ENCODE measurements at regions of chr1 and their contacts with region 1.

Region 1: GRCh38 chr1:202105539-202106276 is 17.0 kb upstream of the GPR37L1 start:
- DNase-seq: peak; percentile 58 to 90
- H3K4me3 ChIP-seq: peak overlapping the region in 1 of 4 experiments; percentile 33; a peak in 1 of 8 replicates
- H3K27ac ChIP-seq: peak overlapping the region; percentile 70; the same call in 1 of the 2 replicates
- H3K4me1 ChIP-seq: peaks cover 19 to 32% (median 20%) of the 10 kb centered on the region in 4 experiments
- H3K27me3 ChIP-seq: no peaks in the 10 kb centered on the region
- CTCF ChIP-seq: no peak
- EP300 ChIP-seq: no peak
- POLR2A ChIP-seq: no peak
- RAD21 ChIP-seq: no peak

Region 2: DNA sequence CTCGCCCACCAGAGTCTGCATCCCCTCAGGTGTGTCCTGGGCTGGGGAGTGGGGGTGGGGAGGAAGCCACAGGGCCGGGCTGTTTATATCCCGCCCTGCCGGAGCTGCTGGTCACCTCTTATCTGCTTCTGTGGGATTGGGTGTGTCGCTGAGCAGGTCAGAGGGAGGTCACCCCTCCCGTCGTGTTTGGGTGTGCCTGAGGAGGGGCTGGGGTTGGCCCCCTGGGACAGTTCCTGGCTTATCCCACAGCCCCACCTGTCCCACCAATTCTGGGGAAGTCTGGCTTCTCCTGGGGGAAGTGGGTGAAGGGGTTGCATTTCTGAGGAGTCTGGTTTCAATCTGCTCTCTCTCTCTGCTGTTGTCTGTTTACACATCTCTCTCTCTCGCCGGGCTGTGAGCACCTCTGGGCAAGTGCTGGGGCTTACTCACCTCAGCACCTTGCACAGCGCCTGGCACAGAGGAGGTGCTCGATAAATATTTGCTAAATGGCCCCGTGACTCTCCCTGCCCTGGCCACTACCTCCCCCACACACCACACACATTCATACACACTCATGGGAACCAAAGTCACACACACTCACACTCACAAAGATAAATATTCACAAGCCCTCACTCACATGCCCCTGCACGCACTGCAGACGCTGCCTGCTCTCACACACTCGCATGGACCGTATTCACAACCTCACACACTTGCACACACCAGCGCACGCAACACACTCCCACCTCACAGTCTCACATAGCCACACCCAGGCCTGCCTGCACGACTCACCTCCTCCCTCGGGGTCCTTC is 87.0 kb before region 1 on chr1:
- CTCF ChIA-PET with region 1: interaction called, 1,014 read pairs
- POLR2A ChIA-PET with region 1: interaction called, 33 read pairs
- DNase-seq: no peak
- H3K4me3 ChIP-seq: no peak overlapping the region
- H3K27ac ChIP-seq: no peak overlapping the region
- H3K4me1 ChIP-seq: peaks cover 0 to 13% (median 2%) of the 10 kb centered on the region in 4 experiments; a peak in 5 of 7 replicates
- H3K27me3 ChIP-seq: no peaks in the 10 kb centered on the region
- CTCF ChIP-seq: no peak
- EP300 ChIP-seq: no peak
- POLR2A ChIP-seq: no peak
- RAD21 ChIP-seq: no peak

Region 3: GRCh38 chr1:202122639-202123335 is 17.1 kb after region 1 on chr1 and contains the start of gene GPR37L1:
- CTCF ChIA-PET with region 1: interaction called, 77 read pairs
- POLR2A ChIA-PET with region 1: interaction called, 8 read pairs
- DNase-seq: peak; percentile 56 to 81
- H3K4me3 ChIP-seq: no peak within 1 kb of the TSS
- H3K27ac ChIP-seq: no peak within 1 kb of the TSS
- H3K4me1 ChIP-seq: peaks cover 0 to 5% (median 4%) of the 10 kb centered on the region in 4 experiments; a peak in 6 of 7 replicates
- H3K27me3 ChIP-seq: no peaks in the 10 kb centered on the region
- CTCF ChIP-seq: peak; percentile 78 to 88 (median 83)
- EP300 ChIP-seq: no peak
- POLR2A ChIP-seq: no peak
- RAD21 ChIP-seq: peak; percentile 52 to 68
- total RNA-seq, gene GPR37L1: 0.08 and 0.13 TPM in 2 replicates

Region 4: DNA sequence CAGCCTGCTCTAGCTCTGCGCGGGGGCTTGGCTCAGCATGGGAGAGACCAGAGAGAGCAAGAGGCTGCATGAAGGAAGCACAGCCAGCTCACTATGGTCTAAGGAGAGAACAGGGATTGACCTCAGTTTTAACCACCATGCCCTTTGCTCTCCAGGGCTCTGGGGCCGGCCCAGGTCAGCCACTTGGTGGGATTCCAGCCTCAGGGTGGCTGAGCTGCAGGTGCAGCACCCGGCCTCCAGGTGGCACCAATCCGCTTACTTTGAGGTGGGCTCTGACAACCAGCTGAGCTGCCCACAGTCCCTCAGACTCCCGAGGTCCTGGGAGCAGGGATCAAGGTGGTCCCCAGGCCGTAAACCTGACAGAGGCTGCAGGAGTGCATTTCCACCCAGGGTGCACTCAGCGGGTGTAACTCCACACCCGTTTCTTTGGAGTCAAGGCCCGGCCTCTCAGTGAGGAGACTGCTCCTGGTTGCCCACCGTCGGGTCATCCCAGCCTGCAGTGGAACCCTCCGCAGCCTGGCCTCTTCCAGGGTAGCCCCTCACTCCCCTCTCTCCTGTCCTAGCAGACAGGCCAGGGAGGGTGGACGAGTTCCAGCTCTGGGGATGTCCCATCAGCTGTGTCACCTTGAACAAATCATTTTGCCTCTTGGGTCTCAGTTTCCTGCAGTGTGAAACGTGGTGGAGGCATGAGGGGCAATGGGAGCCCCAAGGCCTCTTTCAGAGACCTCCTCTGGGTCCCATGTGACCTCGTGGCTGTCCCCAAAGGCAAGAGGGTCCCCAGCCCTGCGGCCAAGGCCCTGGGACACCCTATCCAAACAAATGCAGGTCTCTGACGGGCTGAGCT is 87.3 kb after region 1 on chr1:
- CTCF ChIA-PET with region 1: no interaction called
- POLR2A ChIA-PET with region 1: no interaction called
- DNase-seq: peak in 1 of 2 experiments; percentile 92
- H3K4me3 ChIP-seq: peak overlapping the region in 3 of 4 experiments; percentile 34 to 65 (median 40); a peak in 5 of 8 replicates
- H3K27ac ChIP-seq: no peak overlapping the region
- H3K4me1 ChIP-seq: peaks cover 0 to 9% (median 2%) of the 10 kb centered on the region in 4 experiments; a peak in 5 of 7 replicates
- H3K27me3 ChIP-seq: peaks cover 16 to 31% (median 22%) of the 10 kb centered on the region in 4 experiments
- CTCF ChIP-seq: peak; percentile 93 to 97 (median 96)
- EP300 ChIP-seq: no peak
- POLR2A ChIP-seq: no peak
- RAD21 ChIP-seq: peak; percentile 81 to 86

Measured in H1 (cell line).